ENCODE measurements at regions of chr5 and their contacts with region 1.

Region 1: GRCh38 chr5:128470638-128471037 is 67.4 kb downstream of the FBN2 start:
- DNase-seq: no peak
- ATAC-seq: no peak
- H3K4me3 ChIP-seq: no peak overlapping the region
- H3K27ac ChIP-seq: no peak overlapping the region
- H3K4me1 ChIP-seq: peaks cover 0 to 28% (median 3%) of the 10 kb centered on the region in 9 donors
- H3K27me3 ChIP-seq: no peaks in the 10 kb centered on the region
- CTCF ChIP-seq: no peak

Region 2: GRCh38 chr5:127959152-127959764 is 511.4 kb before region 1 on chr5:
- intact Hi-C with region 1: no loop called
- DNase-seq: peak; percentile 65 to 75
- ATAC-seq: peak in 7 of 8 donors; percentile 34 to 70 (median 47)
- H3K4me3 ChIP-seq: no peak overlapping the region
- H3K27ac ChIP-seq: peak overlapping the region in 8 of 10 donors; percentile 6 to 81 (median 60)
- H3K4me1 ChIP-seq: peaks cover 22 to 73% (median 40%) of the 10 kb centered on the region in 9 donors
- H3K27me3 ChIP-seq: no peaks in the 10 kb centered on the region
- CTCF ChIP-seq: no peak

Region 3: DNA sequence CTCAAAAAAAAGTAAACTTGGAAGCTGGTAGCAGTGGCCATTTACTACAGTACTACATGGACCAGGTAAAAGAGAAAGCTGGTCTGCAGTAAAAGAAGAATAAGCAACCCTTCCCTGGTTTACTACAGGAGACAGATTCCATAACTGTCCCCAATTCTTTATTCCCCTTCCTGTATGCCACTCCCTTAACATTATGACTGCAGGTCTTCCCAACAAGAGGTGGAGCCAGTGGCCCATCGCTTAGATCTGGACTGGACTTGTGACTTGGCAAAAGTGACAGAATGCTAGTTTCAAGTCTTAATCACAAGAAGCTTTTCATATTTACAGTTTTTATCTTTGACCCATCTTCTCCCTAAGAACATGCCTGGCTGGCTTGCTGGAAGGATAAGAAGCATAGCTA is 429.7 kb before region 1 on chr5:
- intact Hi-C with region 1: no loop called
- DNase-seq: no peak
- ATAC-seq: no peak
- H3K4me3 ChIP-seq: no peak overlapping the region
- H3K27ac ChIP-seq: no peak overlapping the region
- H3K4me1 ChIP-seq: peaks cover 0 to 33% (median 17%) of the 10 kb centered on the region in 9 donors
- H3K27me3 ChIP-seq: no peaks in the 10 kb centered on the region
- CTCF ChIP-seq: no peak

Region 4: DNA sequence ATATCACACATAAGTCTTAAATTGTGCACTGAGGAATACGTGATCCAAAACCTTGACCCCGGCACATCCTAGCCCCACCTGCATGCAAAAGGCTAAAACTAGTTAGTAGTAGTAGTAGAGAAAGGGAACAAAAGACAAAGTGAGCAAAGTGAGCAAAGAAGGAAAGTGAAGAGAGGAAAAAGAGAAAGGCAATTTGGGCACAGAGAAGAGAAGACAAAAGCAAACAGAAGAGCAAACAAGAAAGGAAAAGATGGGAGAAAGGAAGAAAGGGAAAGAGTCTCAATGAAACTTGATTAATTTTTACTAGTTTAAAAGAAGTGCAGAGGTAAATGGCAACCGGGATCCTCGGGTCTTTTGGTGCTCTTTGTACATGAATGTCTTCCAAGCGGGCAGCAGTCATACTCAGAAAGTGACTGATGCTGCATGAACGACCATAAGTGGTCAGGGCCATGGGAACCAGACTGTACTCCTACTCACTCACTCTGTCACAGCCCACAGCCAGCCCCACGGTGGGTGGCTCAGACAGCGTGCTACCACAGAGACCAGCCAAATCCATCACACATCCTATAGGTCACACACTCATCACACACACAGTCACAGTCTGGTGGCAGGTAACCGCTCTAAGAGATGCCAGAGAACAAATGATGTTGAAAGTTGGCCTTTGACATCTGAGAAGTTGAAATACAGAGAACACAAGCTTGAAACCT is 136.5 kb before region 1 on chr5:
- intact Hi-C with region 1: loop called in 1 of 10 experiments (anchors 10 kb)
- DNase-seq: no peak
- ATAC-seq: no peak
- H3K4me3 ChIP-seq: no peak overlapping the region
- H3K27ac ChIP-seq: no peak overlapping the region
- H3K4me1 ChIP-seq: peaks cover 0 to 11% (median 4%) of the 10 kb centered on the region in 9 donors
- H3K27me3 ChIP-seq: no peaks in the 10 kb centered on the region
- CTCF ChIP-seq: no peak

Region 5: GRCh38 chr5:128538250-128539037 is 67.8 kb after region 1 on chr5:
- intact Hi-C with region 1: no loop called
- DNase-seq: peak; percentile 81 to 86
- ATAC-seq: peak; percentile 78 to 90 (median 84)
- H3K4me3 ChIP-seq: peak overlapping the region; percentile 29 to 71 (median 64)
- H3K27ac ChIP-seq: peak overlapping the region in 8 of 10 donors; percentile 49 to 78 (median 66)
- H3K4me1 ChIP-seq: peaks cover 0 to 23% (median 16%) of the 10 kb centered on the region in 9 donors
- H3K27me3 ChIP-seq: peaks cover 0 to 48% (median 39%) of the 10 kb centered on the region in 7 donors
- CTCF ChIP-seq: no peak

Measured in heart right ventricle (tissue), 16 donors.